ENCODE measurements at regions of chr2 and their contacts with region 1.

Region 1: DNA sequence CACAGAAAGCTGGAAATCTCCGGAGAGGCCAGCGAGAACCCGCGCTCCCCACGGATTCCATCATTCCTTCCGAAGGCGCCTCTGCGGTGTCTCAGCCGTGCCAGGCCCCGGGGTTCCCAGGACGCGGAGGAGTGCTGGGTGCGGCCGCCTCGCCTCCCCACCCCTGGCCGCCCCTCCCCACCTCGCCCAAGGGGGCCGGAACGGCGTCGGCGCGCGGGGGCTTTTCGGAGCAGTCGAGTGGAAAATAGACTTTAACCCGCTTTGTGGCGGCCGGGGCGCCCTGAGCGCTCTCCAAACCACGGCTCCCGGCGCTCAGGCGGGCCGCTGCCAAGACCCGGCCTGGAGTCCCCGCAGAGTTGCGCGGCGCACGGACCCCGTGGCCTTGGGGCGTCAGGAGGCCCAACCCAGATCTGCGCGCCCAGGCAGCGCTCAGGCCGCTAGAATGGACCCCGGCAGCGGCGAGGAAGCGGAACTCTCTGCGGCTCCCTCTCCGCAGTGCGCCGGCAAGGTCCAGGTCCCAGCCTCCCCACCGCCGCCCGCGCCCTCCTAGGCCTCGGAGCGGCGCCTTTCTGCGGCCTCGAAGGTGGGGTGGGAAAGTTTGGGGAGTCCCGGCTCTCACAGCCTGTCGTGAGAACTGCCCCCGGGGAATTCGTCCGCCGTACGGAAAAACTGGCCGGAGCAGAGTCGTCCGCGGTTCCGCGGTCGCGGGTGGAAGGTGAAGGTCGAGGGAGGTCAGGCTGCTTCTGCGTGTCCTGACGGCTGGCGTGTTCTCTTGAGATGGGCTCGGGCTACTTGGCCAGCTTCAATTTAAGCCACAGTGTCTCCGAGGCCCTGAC is 1.2 kb upstream of the EMX1 start:
- DNase-seq: peak; percentile 18
- H3K4me3 Mint-ChIP-seq: peak overlapping the region; percentile 49
- H3K27ac Mint-ChIP-seq: no peak overlapping the region
- H3K4me1 Mint-ChIP-seq: peaks cover 13% of the 10 kb centered on the region
- H3K27me3 Mint-ChIP-seq: peaks cover 73% of the 10 kb centered on the region

Region 2: GRCh38 chr2:72901426-72901825 is 14.7 kb before region 1 on chr2:
- CTCF ChIA-PET with region 1: no interaction called
- POLR2A ChIA-PET with region 1: no interaction called
- DNase-seq: no peak
- H3K4me3 Mint-ChIP-seq: no peak overlapping the region
- H3K27ac Mint-ChIP-seq: no peak overlapping the region
- H3K4me1 Mint-ChIP-seq: no peaks in the 10 kb centered on the region
- H3K27me3 Mint-ChIP-seq: peaks cover 67% of the 10 kb centered on the region

Region 3: GRCh38 chr2:72927619-72928550 is 11.8 kb after region 1 on chr2:
- CTCF ChIA-PET with region 1: interaction called, 12 read pairs
- POLR2A ChIA-PET with region 1: no interaction called
- DNase-seq: no peak
- H3K4me3 Mint-ChIP-seq: no peak overlapping the region
- H3K27ac Mint-ChIP-seq: no peak overlapping the region
- H3K4me1 Mint-ChIP-seq: peaks cover 11% of the 10 kb centered on the region
- H3K27me3 Mint-ChIP-seq: peaks cover 23% of the 10 kb centered on the region

Region 4: DNA sequence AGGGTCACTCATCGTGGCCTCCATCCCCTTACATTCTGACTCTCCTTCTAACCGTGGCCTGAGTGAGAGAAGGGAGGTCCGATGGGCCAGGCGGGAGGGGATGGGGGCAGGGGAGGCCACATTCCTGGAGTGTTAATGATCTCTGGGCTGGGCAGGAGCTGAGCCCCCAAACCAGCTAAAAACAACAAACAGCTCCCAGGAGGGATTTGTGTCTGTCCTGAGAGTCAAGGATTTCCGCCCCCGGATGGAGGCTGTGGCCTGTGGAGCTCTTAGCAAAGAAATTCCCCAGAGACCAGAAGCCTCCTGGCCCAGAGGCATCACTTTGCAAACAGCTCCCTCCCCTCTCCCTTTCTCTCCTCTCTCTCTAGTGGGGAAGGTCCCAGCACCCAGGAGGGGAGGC is 24.7 kb after region 1 on chr2:
- CTCF ChIA-PET with region 1: no interaction called
- POLR2A ChIA-PET with region 1: no interaction called
- DNase-seq: no peak
- H3K4me3 Mint-ChIP-seq: no peak overlapping the region
- H3K27ac Mint-ChIP-seq: no peak overlapping the region
- H3K4me1 Mint-ChIP-seq: no peaks in the 10 kb centered on the region
- H3K27me3 Mint-ChIP-seq: no peaks in the 10 kb centered on the region